Posterior vena cava (tissue), 2 donors: ENCODE measurements at regions of chr12 and their contacts with region 1.

Region 1: GRCh38 chr12:11705010-11705409 is 55.5 kb downstream of the ETV6 start:
- DNase-seq: no peak

Region 2: DNA sequence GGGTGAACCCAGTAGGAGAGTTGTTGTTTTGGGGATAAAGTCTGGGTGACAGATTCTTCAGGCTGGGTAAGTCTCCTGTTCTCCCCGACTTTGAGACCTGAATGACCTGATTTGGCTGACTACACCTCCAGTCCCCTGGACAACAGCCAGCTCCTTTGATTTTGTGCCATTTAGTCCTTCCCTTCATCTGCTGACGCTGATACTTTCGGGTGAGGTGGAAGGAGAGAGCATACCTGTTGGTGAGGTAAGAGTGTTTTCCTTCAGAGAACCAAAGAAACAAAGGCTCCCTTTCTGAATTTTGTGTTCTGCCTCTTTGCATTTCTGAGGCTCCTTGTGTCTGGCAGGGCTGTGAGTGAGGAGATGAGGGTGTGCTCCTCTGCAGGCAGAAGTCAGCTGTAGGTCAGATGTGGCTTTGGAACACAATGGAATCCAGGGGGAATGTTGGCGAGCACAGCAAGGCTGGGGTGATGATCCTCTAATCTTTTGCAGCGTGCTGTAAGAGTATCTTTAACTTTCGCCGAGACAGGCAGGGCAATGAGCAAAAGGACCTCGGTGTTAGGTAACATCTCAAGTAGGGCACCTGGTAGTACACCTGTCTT is 43.4 kb before region 1 on chr12:
- intact Hi-C with region 1: loop called (anchors 2 to 5 kb)
- DNase-seq: no peak

Region 3: DNA sequence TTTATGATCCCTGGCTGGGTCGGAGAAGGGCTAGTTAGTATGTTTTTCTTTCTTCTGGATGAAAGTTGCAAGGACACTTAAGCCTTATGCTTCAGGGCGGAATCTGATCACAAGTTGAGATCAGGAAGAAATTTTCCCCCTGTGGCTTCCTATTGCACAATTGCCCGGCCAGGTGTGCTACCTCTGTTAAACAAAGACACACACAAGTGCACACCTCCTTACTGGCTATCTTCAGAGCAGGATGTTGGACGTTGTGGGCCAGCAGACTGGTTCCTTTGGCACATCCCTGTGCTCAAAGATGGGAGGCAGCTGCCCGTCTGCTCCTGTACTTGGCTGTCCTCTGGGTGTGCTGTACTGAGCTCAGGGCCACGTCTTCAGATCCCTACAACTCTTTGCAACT is 36.4 kb before region 1 on chr12:
- intact Hi-C with region 1: loop called (anchors 2 to 5 kb)
- DNase-seq: no peak

Region 4: DNA sequence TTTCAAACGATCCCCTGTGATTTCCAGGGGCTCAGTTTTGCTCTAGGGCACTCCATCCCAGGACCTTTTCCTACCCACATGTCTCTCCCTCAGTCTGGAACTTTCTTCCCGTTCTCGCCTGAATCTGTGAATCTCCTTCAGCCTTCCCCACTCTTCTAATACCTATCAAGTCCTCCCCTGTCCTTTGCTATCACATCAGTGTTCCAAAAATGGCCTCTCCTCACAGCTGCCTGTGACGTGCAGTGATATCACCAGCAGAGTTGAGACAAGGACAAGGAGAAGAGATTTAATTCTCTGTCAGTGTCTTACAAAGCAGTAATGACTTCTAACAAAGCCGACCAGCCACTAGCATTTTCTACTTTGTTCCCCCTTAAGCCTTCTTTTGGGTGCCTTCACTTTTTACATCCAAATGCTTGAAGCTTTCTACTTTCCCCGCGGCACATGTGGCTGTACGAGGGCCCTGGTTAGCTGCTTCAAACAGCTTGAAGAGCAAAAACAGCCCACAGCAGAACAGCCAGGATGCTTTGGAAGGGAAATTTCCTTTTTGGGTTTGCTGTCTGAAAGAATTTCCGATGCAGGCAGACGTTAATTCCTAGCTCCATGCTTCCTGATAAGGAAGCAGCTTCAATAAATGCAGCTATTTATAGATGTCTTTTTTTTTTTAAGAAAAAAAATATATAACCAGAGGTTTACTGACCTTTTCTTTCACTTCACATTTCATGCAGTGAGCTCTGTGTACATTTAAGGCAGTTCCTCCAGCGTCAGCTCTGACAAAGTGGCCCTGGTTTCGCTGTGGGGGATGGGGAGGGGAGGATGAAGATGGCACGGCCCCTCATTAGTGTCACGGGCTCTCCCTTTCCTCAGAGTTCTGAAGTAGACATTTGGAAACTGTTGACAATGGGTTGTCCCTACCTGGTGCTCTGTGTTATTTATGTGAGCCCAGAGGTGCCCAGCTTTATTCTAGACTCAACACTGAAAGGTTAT is 53.8 kb after region 1 on chr12:
- intact Hi-C with region 1: loop called in 1 of 2 experiments (anchors 10 kb)
- DNase-seq: no peak